Tibial artery (tissue), 4 donors: ENCODE measurements at regions of chr2 and their contacts with region 1.

Region 1: DNA sequence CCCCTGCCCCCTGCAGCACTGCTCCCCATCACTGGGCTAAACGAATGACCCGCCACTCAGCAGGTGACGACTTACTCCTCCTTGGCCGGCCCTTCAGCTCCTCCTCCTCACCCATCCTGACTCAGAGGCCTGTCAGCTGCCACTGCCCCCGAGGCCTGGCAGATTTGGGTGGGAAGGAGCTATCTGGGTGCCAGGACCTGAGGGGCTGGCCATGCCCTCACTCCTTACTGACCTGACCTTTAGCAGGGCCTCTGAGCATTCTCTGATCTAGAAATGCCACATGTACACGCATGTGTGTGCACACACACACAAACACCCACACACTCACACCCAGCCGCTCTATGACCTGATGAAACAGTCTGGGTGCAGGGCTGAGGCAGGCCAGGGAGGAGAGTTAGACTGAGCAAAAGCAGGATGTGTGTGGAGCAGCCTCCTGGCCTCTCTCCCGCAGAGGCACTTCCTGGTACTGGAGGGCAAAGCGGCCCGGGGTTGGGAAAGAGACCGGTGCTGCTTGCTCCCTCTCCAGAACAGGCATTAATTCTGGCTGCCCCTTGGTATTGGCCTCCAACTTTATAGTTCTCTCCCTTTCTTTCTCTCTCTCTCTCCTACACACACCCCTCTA is 68.0 kb downstream of the ZFP36L2 start:
- DNase-seq: peak; percentile 87 to 95
- H3K4me3 ChIP-seq: no peak overlapping the region
- H3K27ac ChIP-seq: peak overlapping the region; percentile 89 to 91
- H3K4me1 ChIP-seq: peaks cover 6 to 45% (median 37%) of the 10 kb centered on the region in 4 donors
- H3K27me3 ChIP-seq: no peaks in the 10 kb centered on the region
- CTCF ChIP-seq: no peak

Region 2: GRCh38 chr2:43075054-43075593 is 83.2 kb before region 1 on chr2:
- intact Hi-C with region 1: loop called (anchors 10 kb)
- DNase-seq: peak; percentile 89 to 94
- H3K4me3 ChIP-seq: no peak overlapping the region
- H3K27ac ChIP-seq: peak overlapping the region; percentile 77 to 84
- H3K4me1 ChIP-seq: peaks cover 0 to 76% (median 62%) of the 10 kb centered on the region in 4 donors
- H3K27me3 ChIP-seq: no peaks in the 10 kb centered on the region
- CTCF ChIP-seq: no peak

Region 3: GRCh38 chr2:43219383-43220228 is 61.2 kb after region 1 on chr2:
- intact Hi-C with region 1: loop called (anchors 5 kb)
- DNase-seq: peak; percentile 83 to 94
- H3K4me3 ChIP-seq: peak overlapping the region; percentile 87 to 89
- H3K27ac ChIP-seq: peak overlapping the region; percentile 96 to 99
- H3K4me1 ChIP-seq: peaks cover 0 to 86% (median 50%) of the 10 kb centered on the region in 4 donors
- H3K27me3 ChIP-seq: no peaks in the 10 kb centered on the region
- CTCF ChIP-seq: no peak

Region 4: DNA sequence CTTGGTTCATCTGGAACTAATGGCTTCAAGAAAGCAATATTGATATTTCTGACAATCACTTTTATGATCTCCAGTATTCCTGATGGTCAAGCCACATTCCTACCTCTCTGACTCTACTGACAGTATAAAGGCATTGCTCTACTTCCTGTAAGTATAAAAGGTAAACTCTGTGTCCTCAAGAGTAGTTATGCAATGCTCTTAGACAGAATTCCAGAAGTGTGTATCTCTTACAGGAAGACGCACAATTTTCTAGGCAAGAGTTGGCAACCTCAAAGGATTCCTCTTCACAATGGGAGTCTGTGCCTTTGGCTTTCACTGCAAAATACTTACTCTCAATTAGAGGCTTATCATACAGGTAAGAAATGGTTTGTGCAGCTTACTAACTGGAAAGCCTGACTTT is 337.4 kb after region 1 on chr2:
- intact Hi-C with region 1: loop called (anchors 10 kb)
- DNase-seq: no peak
- H3K4me3 ChIP-seq: no peak overlapping the region
- H3K27ac ChIP-seq: no peak overlapping the region
- H3K4me1 ChIP-seq: no peaks in the 10 kb centered on the region
- H3K27me3 ChIP-seq: no peaks in the 10 kb centered on the region
- CTCF ChIP-seq: no peak

Region 5: DNA sequence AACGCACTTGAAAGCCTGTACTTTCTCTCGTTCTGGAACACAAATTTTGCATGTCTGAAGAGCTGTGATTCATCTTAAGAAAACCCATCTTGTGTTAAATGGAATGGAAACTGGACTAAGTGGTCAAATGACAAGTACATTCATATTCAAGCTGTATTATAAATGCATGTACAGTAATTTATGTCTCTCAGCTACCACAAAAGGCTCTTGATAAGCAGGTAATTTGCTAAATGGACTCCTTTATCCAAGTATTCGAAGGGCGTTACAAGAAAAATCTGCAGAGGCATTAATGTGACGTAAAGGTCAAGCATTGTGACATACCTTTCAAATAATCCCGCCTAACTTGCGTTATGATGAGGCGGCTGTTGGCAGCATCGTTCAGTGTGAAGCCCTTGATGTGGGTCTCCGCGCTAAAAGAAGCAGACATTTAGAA is 747.0 kb after region 1 on chr2:
- intact Hi-C with region 1: no loop called
- DNase-seq: no peak
- H3K4me3 ChIP-seq: no peak overlapping the region
- H3K27ac ChIP-seq: no peak overlapping the region
- H3K4me1 ChIP-seq: no peaks in the 10 kb centered on the region
- H3K27me3 ChIP-seq: no peaks in the 10 kb centered on the region
- CTCF ChIP-seq: no peak